CD4-positive, alpha-beta T cell (primary cell): ENCODE measurements at regions of chr7 and their contacts with region 1.

Region 1: GRCh38 chr7:1532483-1533424 is 2.3 kb downstream of the MAFK start:
- DNase-seq: peak; percentile 42 to 81 (median 59)
- ATAC-seq: peak; percentile 51
- H3K4me3 ChIP-seq: peak overlapping the region; percentile 75
- H3K4me3 Mint-ChIP-seq: peak overlapping the region; percentile 95
- H3K27ac ChIP-seq: peak overlapping the region; percentile 88 to 95
- H3K27ac Mint-ChIP-seq: peak overlapping the region; percentile 100
- H3K4me1 ChIP-seq: peaks cover 46% of the 10 kb centered on the region
- H3K4me1 Mint-ChIP-seq: peaks cover 32% of the 10 kb centered on the region
- H3K27me3 ChIP-seq: no peaks in the 10 kb centered on the region
- H3K27me3 Mint-ChIP-seq: peaks cover 4% of the 10 kb centered on the region
- CTCF ChIP-seq: no peak

Region 2: DNA sequence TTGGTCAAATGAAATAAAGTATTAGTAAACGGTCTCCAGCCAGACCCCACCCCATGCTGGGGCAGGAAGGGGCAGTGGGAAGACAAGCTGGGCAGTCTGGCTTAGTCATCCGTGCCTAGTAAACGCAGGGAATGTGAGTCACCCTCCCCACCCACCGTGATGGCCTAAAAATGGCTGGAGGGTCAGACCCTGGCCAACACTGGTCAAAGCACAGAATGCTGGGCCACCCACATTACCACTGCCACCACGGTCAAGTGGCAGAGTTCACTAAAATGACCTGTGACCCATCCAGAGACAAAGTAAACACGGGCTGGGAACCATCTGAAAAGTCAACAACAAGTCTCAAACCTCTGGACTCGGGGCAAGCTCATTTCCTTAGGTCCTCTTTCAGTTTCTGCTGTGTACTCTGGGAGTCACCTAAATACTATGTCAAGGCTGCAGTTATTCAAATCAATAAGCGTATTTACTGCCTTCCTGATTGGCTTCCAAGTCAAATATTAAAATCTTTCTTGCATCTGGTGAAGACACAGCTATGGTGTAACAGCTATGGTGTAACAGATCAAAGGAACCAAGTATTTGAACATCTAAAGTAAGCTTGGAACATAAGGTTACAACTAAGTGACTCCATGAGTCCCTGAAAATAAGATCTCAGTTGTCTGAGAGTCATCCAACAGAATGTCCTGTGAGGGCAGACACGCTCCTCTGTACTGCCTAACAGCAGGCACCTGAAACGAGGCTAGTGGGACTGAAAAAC is 375.8 kb before region 1 on chr7:
- CTCF ChIA-PET with region 1: no interaction called
- POLR2A ChIA-PET with region 1: no interaction called
- intact Hi-C with region 1: no loop called
- DNase-seq: no peak
- ATAC-seq: no peak
- H3K4me3 ChIP-seq: no peak overlapping the region
- H3K4me3 Mint-ChIP-seq: peak overlapping the region; percentile 90
- H3K27ac ChIP-seq: no peak overlapping the region
- H3K27ac Mint-ChIP-seq: peak overlapping the region; percentile 87
- H3K4me1 ChIP-seq: peaks cover 17% of the 10 kb centered on the region
- H3K4me1 Mint-ChIP-seq: peaks cover 29% of the 10 kb centered on the region
- H3K27me3 ChIP-seq: no peaks in the 10 kb centered on the region
- H3K27me3 Mint-ChIP-seq: no peaks in the 10 kb centered on the region
- CTCF ChIP-seq: no peak

Region 3: DNA sequence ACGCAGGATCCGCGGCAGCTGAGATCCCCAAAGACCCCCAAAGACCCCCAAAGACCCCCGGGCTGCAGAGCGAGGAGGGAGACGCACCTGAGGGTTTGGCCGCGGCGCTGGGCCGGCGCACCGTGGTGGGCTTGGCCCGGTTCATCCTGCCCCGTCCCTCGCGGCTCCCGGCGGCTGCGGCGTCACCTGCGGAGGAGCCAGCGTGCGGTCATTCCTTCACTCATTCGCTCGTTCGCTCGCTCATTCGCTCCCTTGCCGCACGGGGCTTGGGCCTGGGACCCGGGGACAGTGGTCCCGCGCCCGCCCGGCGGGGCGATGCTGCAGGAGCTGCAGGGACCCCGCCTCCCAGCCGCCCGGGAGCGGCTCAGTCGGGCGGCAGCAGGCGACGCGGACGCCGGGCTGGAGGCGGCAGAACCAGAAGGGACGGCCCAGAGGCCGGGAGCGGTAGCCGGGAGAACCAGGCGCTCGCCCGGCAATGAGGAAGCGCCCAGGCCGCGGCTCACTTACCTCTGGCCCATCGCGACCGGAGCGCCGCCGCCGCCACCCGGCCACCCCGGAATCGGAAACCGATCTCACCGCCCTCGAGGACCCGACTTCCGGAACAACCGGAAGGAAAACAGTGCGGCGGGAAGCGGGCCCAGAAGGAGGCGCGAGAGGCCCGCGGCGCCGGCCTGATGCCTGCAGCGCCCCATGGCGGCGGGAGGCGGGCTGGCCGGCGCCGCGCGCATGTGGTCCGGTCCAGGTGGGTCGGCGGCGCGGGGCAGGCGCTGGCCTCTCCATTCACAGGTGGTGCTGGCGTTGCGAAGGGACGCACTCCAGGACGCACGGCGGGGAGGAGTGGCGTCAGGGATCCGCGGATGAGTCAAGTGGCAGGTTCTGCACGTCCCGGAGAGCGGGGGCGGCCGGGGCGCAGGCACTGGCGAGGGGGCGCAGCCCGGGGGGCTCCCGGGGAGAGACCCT is 28.7 kb before region 1 on chr7 and contains the start of gene INTS1:
- CTCF ChIA-PET with region 1: interaction called, 7 read pairs
- POLR2A ChIA-PET with region 1: no interaction called
- intact Hi-C with region 1: loop called (anchors 1 to 2 kb)
- DNase-seq: peak; percentile 82 to 94 (median 87)
- ATAC-seq: peak; percentile 83
- H3K4me3 ChIP-seq: peak within 1 kb of the TSS; percentile 74
- H3K4me3 Mint-ChIP-seq: peak within 1 kb of the TSS; percentile 90
- H3K27ac ChIP-seq: peak within 1 kb of the TSS in 1 of 2 donors; percentile 29
- H3K27ac Mint-ChIP-seq: peak within 1 kb of the TSS; percentile 71
- H3K4me1 ChIP-seq: peaks cover 60% of the 10 kb centered on the region
- H3K4me1 Mint-ChIP-seq: peaks cover 31% of the 10 kb centered on the region
- H3K27me3 ChIP-seq: no peaks in the 10 kb centered on the region
- H3K27me3 Mint-ChIP-seq: peaks cover 4% of the 10 kb centered on the region
- CTCF ChIP-seq: peak; percentile 87
- total RNA-seq, gene INTS1: 91.0 to 91.5 TPM

Region 4: GRCh38 chr7:1512781-1513656 is 19.7 kb before region 1 on chr7:
- CTCF ChIA-PET with region 1: no interaction called
- POLR2A ChIA-PET with region 1: interaction called, 6 read pairs
- intact Hi-C with region 1: loop called in 1 of 2 experiments (anchors 2 kb)
- DNase-seq: peak; percentile 31 to 76 (median 56)
- ATAC-seq: peak; percentile 94
- H3K4me3 ChIP-seq: peak overlapping the region; percentile 19
- H3K4me3 Mint-ChIP-seq: peak overlapping the region; percentile 59
- H3K27ac ChIP-seq: peak overlapping the region in 1 of 2 donors; percentile 21
- H3K27ac Mint-ChIP-seq: peak overlapping the region; percentile 75
- H3K4me1 ChIP-seq: peaks cover 36% of the 10 kb centered on the region
- H3K4me1 Mint-ChIP-seq: peaks cover 32% of the 10 kb centered on the region
- H3K27me3 ChIP-seq: no peaks in the 10 kb centered on the region
- H3K27me3 Mint-ChIP-seq: no peaks in the 10 kb centered on the region
- CTCF ChIP-seq: no peak

Region 5: DNA sequence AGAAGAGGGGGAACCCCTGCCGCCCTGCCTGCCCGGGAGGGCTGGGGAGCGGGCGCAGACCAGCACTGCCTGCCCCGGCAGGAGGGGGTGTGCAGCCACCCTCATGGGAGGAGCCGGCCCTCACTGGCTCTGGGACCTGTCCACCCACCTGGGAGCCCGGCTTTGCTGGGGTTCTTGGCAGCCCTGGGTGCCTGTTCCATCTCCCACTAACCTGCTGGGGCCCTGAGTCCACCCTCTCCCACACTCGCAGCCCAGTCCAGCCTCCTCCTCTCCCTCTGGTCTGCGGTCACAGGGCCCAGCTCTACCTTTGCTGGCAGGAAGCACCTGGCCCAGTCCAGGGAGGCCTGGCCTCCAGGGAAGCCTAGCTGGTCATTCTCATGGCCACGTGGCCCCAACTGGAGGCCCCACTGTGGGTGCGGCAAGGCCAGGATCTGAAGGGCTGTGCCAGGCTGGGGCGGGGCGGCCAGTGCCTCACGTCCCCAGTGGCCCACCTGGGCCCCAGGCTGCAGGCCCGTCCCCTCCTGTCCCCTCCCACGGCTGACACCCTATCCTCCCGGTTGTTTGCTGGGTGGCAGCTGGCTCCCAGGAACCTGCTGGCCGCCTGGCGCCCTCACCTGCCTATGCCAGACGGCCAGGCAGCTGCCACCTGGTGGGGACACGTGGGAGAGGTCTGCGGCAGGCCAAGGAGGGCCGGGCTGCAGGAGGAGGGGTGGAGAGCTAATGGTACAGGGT is 23.2 kb after region 1 on chr7 and contains the start of gene TMEM184A:
- CTCF ChIA-PET with region 1: interaction called, 12 read pairs
- POLR2A ChIA-PET with region 1: no interaction called
- intact Hi-C with region 1: no loop called
- DNase-seq: peak in 13 of 14 experiments; percentile 26 to 76 (median 53)
- ATAC-seq: peak; percentile 92
- H3K4me3 ChIP-seq: no peak within 1 kb of the TSS
- H3K4me3 Mint-ChIP-seq: no peak within 1 kb of the TSS
- H3K27ac ChIP-seq: no peak within 1 kb of the TSS
- H3K27ac Mint-ChIP-seq: no peak within 1 kb of the TSS
- H3K4me1 ChIP-seq: peaks cover 6% of the 10 kb centered on the region
- H3K4me1 Mint-ChIP-seq: no peaks in the 10 kb centered on the region
- H3K27me3 ChIP-seq: no peaks in the 10 kb centered on the region
- H3K27me3 Mint-ChIP-seq: no peaks in the 10 kb centered on the region
- CTCF ChIP-seq: peak; percentile 49
- total RNA-seq, gene TMEM184A: 0.06 TPM in 1 of 2 experiments, not detected in the other

Region 6: GRCh38 chr7:1580422-1581030 is 47.8 kb after region 1 on chr7:
- CTCF ChIA-PET with region 1: no interaction called
- POLR2A ChIA-PET with region 1: no interaction called
- intact Hi-C with region 1: no loop called
- DNase-seq: no peak
- ATAC-seq: no peak
- H3K4me3 ChIP-seq: no peak overlapping the region
- H3K4me3 Mint-ChIP-seq: no peak overlapping the region
- H3K27ac ChIP-seq: no peak overlapping the region
- H3K27ac Mint-ChIP-seq: no peak overlapping the region
- H3K4me1 ChIP-seq: peaks cover 9% of the 10 kb centered on the region
- H3K4me1 Mint-ChIP-seq: peaks cover 13% of the 10 kb centered on the region
- H3K27me3 ChIP-seq: no peaks in the 10 kb centered on the region
- H3K27me3 Mint-ChIP-seq: no peaks in the 10 kb centered on the region
- CTCF ChIP-seq: no peak